A673 (cell line): ENCODE measurements at regions of chr3 and their contacts with region 1.

Region 1: GRCh38 chr3:124761250-124761796 is 31.1 kb downstream of the UMPS start:
- DNase-seq: peak; percentile 86
- H3K4me3 ChIP-seq: no peak overlapping the region
- H3K27ac ChIP-seq: no peak overlapping the region
- H3K4me1 ChIP-seq: peaks cover 12% of the 10 kb centered on the region
- H3K27me3 ChIP-seq: no peaks in the 10 kb centered on the region
- CTCF ChIP-seq: peak; percentile 96

Region 2: DNA sequence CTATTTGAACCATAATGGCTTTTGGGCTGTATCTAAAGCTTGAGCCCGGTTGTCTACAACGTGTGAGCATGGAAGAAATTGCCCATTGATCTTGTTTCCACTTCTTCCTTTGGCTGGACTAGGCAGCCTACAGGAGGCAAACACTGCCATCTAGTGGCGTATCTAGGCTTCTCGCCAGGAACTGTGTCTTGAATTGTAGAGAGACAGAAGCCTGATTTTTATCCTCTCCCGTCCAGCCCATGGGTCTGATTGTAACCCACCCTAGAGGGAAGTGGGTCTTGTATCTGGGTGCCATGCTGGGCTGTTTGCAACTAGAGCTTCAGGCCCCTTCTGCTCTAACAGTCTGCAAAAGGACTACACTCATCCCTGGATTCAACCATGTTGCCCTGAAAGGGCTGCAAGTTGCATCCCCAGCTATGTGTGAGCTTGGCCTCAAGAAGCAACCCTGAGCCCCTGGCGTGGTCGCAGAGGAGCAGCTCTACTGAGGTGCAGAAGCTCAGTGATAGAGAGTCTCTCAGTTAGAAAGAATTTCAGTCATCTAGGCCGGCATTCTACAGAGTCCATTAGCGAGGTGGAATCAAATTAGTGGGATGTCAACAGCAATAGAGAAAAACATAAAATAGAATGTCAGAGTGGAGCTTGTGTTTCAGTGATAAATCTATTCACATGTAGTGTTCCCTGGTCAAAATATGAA is 201.3 kb before region 1 on chr3:
- CTCF ChIA-PET with region 1: interaction called, 6 read pairs
- POLR2A ChIA-PET with region 1: no interaction called
- intact Hi-C with region 1: loop called (anchors 10 kb)
- DNase-seq: peak; percentile 93
- H3K4me3 ChIP-seq: no peak overlapping the region
- H3K27ac ChIP-seq: peak overlapping the region; percentile 73
- H3K4me1 ChIP-seq: peaks cover 35% of the 10 kb centered on the region
- H3K27me3 ChIP-seq: no peaks in the 10 kb centered on the region
- CTCF ChIP-seq: peak; percentile 94

Region 3: GRCh38 chr3:124700880-124701684 is 60.2 kb before region 1 on chr3:
- CTCF ChIA-PET with region 1: no interaction called
- POLR2A ChIA-PET with region 1: no interaction called
- intact Hi-C with region 1: no loop called
- DNase-seq: no peak
- H3K4me3 ChIP-seq: no peak overlapping the region
- H3K27ac ChIP-seq: peak overlapping the region; percentile 95
- H3K4me1 ChIP-seq: peaks cover 33% of the 10 kb centered on the region
- H3K27me3 ChIP-seq: no peaks in the 10 kb centered on the region
- CTCF ChIP-seq: no peak

Region 4: DNA sequence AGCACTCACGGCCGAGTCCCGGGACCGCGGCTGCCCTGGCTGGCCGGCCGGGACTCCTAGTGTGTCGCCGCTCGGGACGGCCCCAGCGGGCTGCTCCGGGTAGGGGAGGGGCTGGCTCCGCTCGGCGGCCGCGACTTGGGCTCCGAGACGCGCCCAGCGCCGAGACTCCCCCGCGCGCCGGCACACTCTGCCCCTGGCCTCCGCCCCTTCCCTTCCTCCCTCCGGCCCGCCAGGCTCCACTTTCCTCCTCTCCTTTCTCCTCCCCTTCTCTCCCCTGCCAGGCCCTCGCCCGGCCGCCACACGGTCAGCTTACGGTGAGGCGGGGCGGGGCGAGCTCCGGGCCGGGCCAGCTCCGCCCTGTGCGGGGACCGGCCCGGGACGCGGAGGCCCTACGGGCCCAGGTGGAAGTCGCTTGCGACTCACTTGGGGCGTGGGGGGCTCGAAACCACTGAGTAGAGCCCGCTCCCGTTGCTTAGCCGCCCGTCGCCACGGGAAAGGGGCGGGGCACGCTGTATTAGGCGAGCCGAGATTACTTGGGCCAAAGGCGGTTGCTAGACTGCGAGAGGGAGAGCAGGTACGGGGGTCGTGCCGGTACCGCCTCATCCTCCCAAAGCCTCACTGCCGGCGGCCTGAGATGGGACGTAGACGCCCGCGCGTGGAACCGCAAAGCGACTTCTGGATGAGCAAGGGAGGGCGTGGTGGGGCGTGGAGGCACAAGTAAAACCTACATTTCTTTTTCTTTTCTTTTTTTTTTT is 126.0 kb after region 1 on chr3 and contains the start of gene ITGB5:
- CTCF ChIA-PET with region 1: interaction called, 3 read pairs
- POLR2A ChIA-PET with region 1: interaction called, 3 read pairs
- intact Hi-C with region 1: loop called (anchors 5 kb)
- DNase-seq: peak; percentile 82
- H3K4me3 ChIP-seq: peak within 1 kb of the TSS; percentile 85
- H3K27ac ChIP-seq: peak within 1 kb of the TSS; percentile 88
- H3K4me1 ChIP-seq: peaks cover 32% of the 10 kb centered on the region
- H3K27me3 ChIP-seq: no peaks in the 10 kb centered on the region
- CTCF ChIP-seq: no peak
- total RNA-seq, gene ITGB5: 116 and 125 TPM in 2 replicates

Region 5: GRCh38 chr3:124905849-124906248 is 144.5 kb after region 1 on chr3:
- CTCF ChIA-PET with region 1: interaction called, 39 read pairs
- POLR2A ChIA-PET with region 1: no interaction called
- intact Hi-C with region 1: loop called (anchors 1 kb)
- DNase-seq: no peak
- H3K4me3 ChIP-seq: no peak overlapping the region
- H3K27ac ChIP-seq: no peak overlapping the region
- H3K4me1 ChIP-seq: no peaks in the 10 kb centered on the region
- H3K27me3 ChIP-seq: no peaks in the 10 kb centered on the region
- CTCF ChIP-seq: no peak

Region 6: DNA sequence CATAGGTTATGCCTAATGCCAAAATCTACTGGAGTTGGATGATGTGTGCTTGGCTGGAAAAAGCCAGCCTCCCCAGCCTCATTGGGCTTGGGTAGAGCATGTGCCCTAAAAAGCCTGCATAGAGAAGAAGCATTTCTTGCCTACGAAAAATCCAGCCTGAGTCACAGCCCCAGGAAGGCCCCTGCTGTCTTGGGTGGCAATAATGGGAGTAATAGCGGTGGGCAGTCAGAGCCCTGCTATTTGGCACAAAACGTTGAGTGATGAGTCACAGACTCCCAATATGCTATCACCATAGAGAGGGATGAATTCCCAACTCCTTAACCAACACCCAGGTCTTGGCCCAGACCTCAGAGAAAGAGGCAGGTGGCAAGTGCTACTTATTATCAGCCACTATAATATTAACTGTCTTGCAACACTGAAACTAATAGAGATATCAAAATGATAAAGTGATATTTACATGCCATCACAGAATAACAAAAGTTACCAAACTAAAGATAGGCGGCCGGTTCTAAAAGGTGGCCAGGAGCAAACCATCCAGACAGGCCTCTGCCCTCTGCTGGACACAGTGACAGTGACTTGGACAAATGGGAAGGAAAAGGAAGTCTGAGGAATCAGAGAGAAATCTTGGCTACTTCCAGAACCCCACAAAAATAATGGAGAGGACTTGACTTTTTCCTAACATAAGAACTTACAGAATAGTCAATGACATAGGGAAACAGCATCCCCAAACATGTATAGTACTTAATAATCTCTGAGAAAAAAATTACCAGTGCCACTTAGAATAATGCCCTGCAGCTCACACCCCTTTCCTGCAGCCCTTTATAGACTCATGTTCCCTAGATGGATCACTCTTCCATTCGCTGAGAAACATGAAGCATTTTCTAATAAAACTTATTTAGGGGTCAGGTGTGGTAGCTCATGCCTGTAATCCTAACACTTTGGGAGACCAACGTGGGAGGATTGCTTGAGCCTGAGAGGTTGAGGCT is 225.1 kb after region 1 on chr3:
- CTCF ChIA-PET with region 1: interaction called, 5 read pairs
- POLR2A ChIA-PET with region 1: no interaction called
- intact Hi-C with region 1: loop called (anchors 2 kb)
- DNase-seq: peak; percentile 89
- H3K4me3 ChIP-seq: no peak overlapping the region
- H3K27ac ChIP-seq: peak overlapping the region; percentile 55
- H3K4me1 ChIP-seq: peaks cover 15% of the 10 kb centered on the region
- H3K27me3 ChIP-seq: no peaks in the 10 kb centered on the region
- CTCF ChIP-seq: peak; percentile 39; the same call in 1 of the 2 replicates

Region 7: GRCh38 chr3:125280668-125281361 is 519.5 kb after region 1 on chr3:
- CTCF ChIA-PET with region 1: no interaction called
- POLR2A ChIA-PET with region 1: no interaction called
- intact Hi-C with region 1: no loop called
- DNase-seq: peak; percentile 95
- H3K4me3 ChIP-seq: no peak overlapping the region
- H3K27ac ChIP-seq: peak overlapping the region; percentile 65
- H3K4me1 ChIP-seq: peaks cover 35% of the 10 kb centered on the region
- H3K27me3 ChIP-seq: no peaks in the 10 kb centered on the region
- CTCF ChIP-seq: no peak

Region 8: DNA sequence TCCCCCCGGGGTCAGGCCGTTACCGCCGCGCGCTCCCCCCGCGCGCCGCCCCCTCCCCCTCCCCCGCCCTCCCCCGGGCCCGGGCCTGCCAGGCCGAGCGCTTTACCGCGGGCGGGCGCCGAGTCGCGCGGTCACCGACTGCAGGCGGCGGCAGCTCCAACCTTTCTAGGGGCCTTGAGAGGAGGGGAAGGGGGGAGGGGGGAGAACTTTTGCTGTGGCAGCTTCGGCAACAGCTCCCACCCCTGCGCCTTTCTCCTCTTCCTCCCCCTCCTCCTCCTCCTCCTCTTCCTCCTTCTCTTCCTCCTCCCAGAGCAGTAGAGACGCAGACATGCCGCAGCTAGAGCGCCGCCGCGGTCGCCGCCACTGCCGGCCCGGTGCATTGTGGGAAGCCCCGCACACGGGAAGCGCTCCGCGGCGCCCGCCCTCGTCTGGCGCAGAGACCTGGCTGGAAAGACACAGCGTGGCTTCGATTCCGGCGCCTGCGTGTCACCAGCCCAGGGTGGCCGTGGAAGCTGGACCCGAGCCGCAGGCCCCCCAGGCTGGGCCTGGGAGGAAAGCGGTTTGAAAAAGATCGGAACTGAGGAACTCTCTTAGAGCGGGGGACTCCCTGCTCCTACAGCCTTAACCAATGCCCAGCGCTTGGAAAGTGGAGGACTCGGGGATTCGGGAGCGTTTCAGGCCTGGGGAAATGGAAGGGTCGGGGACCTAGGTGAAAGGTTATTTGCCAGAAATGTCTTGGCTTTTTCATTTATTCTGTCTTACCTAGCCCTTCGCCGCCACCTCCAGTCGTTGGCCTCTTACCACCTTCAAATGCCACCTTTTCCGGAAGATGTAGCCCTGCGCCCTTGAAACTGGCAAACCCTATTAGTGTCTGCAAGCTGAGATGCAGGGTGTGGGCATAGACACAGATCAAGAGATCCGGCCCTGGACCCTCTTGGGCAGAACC is 613.9 kb after region 1 on chr3 and contains the start of gene ZNF148:
- CTCF ChIA-PET with region 1: no interaction called
- POLR2A ChIA-PET with region 1: no interaction called
- intact Hi-C with region 1: no loop called
- DNase-seq: peak; percentile 92
- H3K4me3 ChIP-seq: peak within 1 kb of the TSS; percentile 85
- H3K27ac ChIP-seq: peak within 1 kb of the TSS; percentile 90
- H3K4me1 ChIP-seq: peaks cover 9% of the 10 kb centered on the region
- H3K27me3 ChIP-seq: no peaks in the 10 kb centered on the region
- CTCF ChIP-seq: no peak; the same call in 1 of the 2 replicates
- total RNA-seq, gene ZNF148: 45.1 and 47.8 TPM in 2 replicates

Region 9: GRCh38 chr3:125437631-125438435 is 676.5 kb after region 1 on chr3:
- CTCF ChIA-PET with region 1: no interaction called
- POLR2A ChIA-PET with region 1: no interaction called
- intact Hi-C with region 1: loop called (anchors 2 kb)
- DNase-seq: peak; percentile 53
- H3K4me3 ChIP-seq: no peak overlapping the region
- H3K27ac ChIP-seq: no peak overlapping the region
- H3K4me1 ChIP-seq: no peaks in the 10 kb centered on the region
- H3K27me3 ChIP-seq: no peaks in the 10 kb centered on the region
- CTCF ChIP-seq: peak; percentile 97